ENCODE measurements at regions of chr16 and their contacts with region 1.

Region 1: GRCh38 chr16:76653390-76654026 is 376.3 kb downstream of the CNTNAP4 start:
- DNase-seq: peak; percentile 71
- ATAC-seq: peak; percentile 96
- H3K4me3 ChIP-seq: no peak overlapping the region
- H3K27ac ChIP-seq: no peak overlapping the region
- H3K4me1 ChIP-seq: peaks cover 7% of the 10 kb centered on the region
- H3K27me3 ChIP-seq: no peaks in the 10 kb centered on the region
- CTCF ChIP-seq: peak; percentile 85
- EP300 ChIP-seq: no peak
- POLR2A ChIP-seq: no peak
- RAD21 ChIP-seq: peak; percentile 77

Region 2: GRCh38 chr16:75789237-75789636 is 864.3 kb before region 1 on chr16:
- CTCF ChIA-PET with region 1: interaction called, 20 read pairs
- POLR2A ChIA-PET with region 1: no interaction called
- in situ Hi-C with region 1: loop called (anchors 5 kb)
- intact Hi-C with region 1: loop called (anchors 1 kb)
- DNase-seq: peak; percentile 53
- ATAC-seq: peak; percentile 82
- H3K4me3 ChIP-seq: no peak overlapping the region
- H3K27ac ChIP-seq: no peak overlapping the region
- H3K4me1 ChIP-seq: no peaks in the 10 kb centered on the region
- H3K27me3 ChIP-seq: no peaks in the 10 kb centered on the region
- CTCF ChIP-seq: peak; percentile 84
- EP300 ChIP-seq: no peak
- POLR2A ChIP-seq: no peak
- RAD21 ChIP-seq: peak; percentile 52; the same call in 1 of the 2 replicates

Region 3: DNA sequence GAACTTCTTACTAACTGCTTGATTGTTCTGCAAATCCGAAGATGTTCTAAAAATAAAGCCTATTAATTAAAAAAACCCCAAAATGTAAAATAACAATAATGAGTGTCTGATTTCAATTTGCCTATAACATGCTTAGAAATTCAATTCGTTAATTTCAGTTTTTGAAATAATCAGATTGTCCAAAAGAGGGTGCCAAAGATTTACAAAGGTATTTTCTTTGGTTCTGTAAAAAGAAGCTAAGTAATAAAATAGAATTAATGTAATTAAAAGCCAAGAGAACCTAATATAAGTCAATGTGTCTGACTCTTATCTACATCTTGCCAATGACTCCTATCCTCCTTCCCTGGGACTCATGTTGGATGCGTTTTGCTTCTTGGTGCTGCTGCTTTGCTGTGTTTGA is 852.2 kb before region 1 on chr16:
- CTCF ChIA-PET with region 1: no interaction called
- POLR2A ChIA-PET with region 1: no interaction called
- in situ Hi-C with region 1: no loop called
- intact Hi-C with region 1: loop called (anchors 5 kb)
- DNase-seq: no peak
- ATAC-seq: no peak
- H3K4me3 ChIP-seq: no peak overlapping the region
- H3K27ac ChIP-seq: no peak overlapping the region
- H3K4me1 ChIP-seq: no peaks in the 10 kb centered on the region
- H3K27me3 ChIP-seq: peaks cover 0 to 6% of the 10 kb centered on the region in 2 experiments; a peak in 3 of 5 replicates
- CTCF ChIP-seq: peak; percentile 27; the same call in 1 of the 2 replicates
- EP300 ChIP-seq: no peak
- POLR2A ChIP-seq: no peak
- RAD21 ChIP-seq: no peak

Region 4: GRCh38 chr16:76278980-76279379 is 374.5 kb before region 1 on chr16:
- CTCF ChIA-PET with region 1: interaction called, 14 read pairs
- POLR2A ChIA-PET with region 1: no interaction called
- in situ Hi-C with region 1: loop called (anchors 10 kb)
- intact Hi-C with region 1: loop called (anchors 1 kb)
- DNase-seq: peak; percentile 13
- ATAC-seq: peak; percentile 79
- H3K4me3 ChIP-seq: no peak overlapping the region
- H3K27ac ChIP-seq: no peak overlapping the region
- H3K4me1 ChIP-seq: no peaks in the 10 kb centered on the region
- H3K27me3 ChIP-seq: no peaks in the 10 kb centered on the region
- CTCF ChIP-seq: peak; percentile 59
- EP300 ChIP-seq: no peak
- POLR2A ChIP-seq: no peak
- RAD21 ChIP-seq: 0 out of 2 replicates have a peak, but pooled peaks have one; percentile 32

Region 5: GRCh38 chr16:76574651-76575050 is 78.9 kb before region 1 on chr16:
- CTCF ChIA-PET with region 1: no interaction called
- POLR2A ChIA-PET with region 1: no interaction called
- in situ Hi-C with region 1: no loop called
- intact Hi-C with region 1: loop called (anchors 5 kb)
- DNase-seq: peak; percentile 97
- ATAC-seq: peak; percentile 99
- H3K4me3 ChIP-seq: peak overlapping the region in 1 of 3 experiments; percentile 14; a peak in 1 of 6 replicates
- H3K27ac ChIP-seq: peak overlapping the region; percentile 72
- H3K4me1 ChIP-seq: peaks cover 24% of the 10 kb centered on the region
- H3K27me3 ChIP-seq: no peaks in the 10 kb centered on the region
- CTCF ChIP-seq: no peak
- EP300 ChIP-seq: peak; percentile 74 to 88; a peak in 3 of 4 replicates
- POLR2A ChIP-seq: no peak
- RAD21 ChIP-seq: no peak

Region 6: DNA sequence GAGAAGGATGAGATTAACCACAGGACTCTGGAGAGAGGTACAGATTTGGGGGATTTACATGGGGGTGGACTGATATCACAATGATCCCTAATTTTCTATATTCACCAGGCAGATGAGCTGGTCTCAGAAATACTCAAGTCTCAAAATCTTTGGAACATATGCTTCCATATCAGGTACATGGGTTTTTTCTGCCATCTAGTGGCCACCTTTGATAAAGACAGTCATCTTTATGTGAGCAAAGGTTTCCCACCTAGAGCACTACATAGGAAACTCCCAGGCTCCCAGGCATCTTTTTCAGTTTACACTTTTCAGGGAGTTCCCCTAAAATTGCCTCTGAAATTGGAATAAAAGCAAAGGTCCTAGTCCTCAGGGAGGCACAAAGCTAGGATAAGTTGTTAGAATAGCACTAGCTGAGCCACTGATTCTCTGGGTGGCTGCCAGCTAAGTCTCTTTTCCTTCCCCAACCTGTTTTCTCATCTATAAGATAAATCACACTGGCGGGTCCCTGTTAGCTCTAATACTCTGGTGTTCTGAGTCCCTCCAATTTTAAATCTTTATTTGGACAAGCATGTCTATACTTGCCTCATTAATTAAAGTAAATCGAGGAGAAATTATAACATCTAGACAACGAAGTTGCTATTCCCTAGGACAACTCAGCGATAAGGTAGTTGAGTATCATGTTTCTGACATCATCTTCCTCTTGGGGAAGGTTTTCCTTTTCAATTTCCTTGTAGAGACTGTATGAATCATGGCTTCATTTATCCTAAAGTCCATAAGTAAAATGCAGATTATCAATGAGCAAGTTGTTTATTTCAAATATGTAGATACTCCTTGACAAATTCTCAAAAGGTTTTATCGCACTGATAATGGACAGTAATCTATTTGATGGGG is 518.5 kb after region 1 on chr16:
- CTCF ChIA-PET with region 1: no interaction called
- POLR2A ChIA-PET with region 1: no interaction called
- in situ Hi-C with region 1: loop called (anchors 25 kb)
- intact Hi-C with region 1: loop called (anchors 5 kb)
- DNase-seq: peak; percentile 66
- ATAC-seq: peak; percentile 92
- H3K4me3 ChIP-seq: no peak overlapping the region
- H3K27ac ChIP-seq: no peak overlapping the region
- H3K4me1 ChIP-seq: no peaks in the 10 kb centered on the region
- H3K27me3 ChIP-seq: no peaks in the 10 kb centered on the region
- CTCF ChIP-seq: peak; percentile 84
- EP300 ChIP-seq: no peak
- POLR2A ChIP-seq: no peak
- RAD21 ChIP-seq: peak; percentile 30; the same call in 1 of the 2 replicates